Calu3 (cell line): ENCODE measurements at regions of chr6 and their contacts with region 1.

Region 1: GRCh38 chr6:1110164-1110563 is 201.7 kb upstream of the FOXQ1 start:
- DNase-seq: peak; percentile 32
- H3K4me3 Mint-ChIP-seq: no peak overlapping the region
- H3K27ac Mint-ChIP-seq: no peak overlapping the region
- H3K4me1 Mint-ChIP-seq: peaks cover 27% of the 10 kb centered on the region
- H3K27me3 Mint-ChIP-seq: no peaks in the 10 kb centered on the region
- CTCF ChIP-seq: no peak

Region 2: DNA sequence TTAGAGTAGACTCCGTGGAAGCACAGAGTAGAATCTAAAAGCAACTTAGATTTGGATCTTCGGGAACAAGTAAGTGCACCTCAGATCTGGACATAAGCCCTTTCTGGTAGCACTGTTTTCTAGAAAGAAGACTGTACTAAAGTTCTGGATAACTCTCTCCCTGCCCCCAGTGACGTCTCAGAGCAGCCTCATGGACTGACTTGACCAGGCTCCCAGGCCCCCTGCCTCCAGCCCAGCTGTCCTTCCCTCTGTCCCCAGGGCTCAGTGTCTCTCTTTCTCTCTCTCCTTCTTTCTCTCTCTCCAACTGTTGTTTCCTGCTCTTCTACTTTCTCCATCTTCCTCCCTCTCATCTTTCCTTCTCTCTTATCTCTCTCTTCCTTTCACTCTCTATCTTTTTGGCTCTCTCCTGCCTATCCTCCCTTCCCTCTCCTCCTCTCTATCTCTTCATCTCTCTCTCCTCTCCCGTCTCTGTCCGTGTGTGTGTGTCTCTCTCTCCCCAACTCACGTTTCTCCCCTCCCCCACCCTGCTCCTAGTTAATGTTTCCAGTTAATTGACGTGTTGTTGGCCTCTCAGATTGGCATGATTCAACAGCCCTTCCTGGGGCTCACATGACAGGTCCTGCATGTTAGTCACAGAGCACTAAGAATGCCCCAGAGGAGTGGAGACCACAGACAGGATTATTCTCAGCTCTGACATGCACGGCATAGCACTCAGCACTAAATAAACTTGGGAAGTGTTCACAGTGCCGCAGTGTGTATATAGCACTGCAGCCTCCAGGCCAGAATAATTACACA is 21.3 kb after region 1 on chr6:
- CTCF ChIA-PET with region 1: no interaction called
- intact Hi-C with region 1: no loop called
- DNase-seq: peak; percentile 70
- H3K4me3 Mint-ChIP-seq: peak overlapping the region; percentile 3
- H3K27ac Mint-ChIP-seq: peak overlapping the region; percentile 19
- H3K4me1 Mint-ChIP-seq: peaks cover 40% of the 10 kb centered on the region
- H3K27me3 Mint-ChIP-seq: no peaks in the 10 kb centered on the region
- CTCF ChIP-seq: no peak

Region 3: GRCh38 chr6:1179571-1180459 is 69.7 kb after region 1 on chr6:
- CTCF ChIA-PET with region 1: no interaction called
- intact Hi-C with region 1: loop called (anchors 5 kb)
- DNase-seq: no peak
- H3K4me3 Mint-ChIP-seq: peak overlapping the region; percentile 45
- H3K27ac Mint-ChIP-seq: no peak overlapping the region
- H3K4me1 Mint-ChIP-seq: peaks cover 8% of the 10 kb centered on the region
- H3K27me3 Mint-ChIP-seq: peaks cover 12% of the 10 kb centered on the region
- CTCF ChIP-seq: no peak

Region 4: DNA sequence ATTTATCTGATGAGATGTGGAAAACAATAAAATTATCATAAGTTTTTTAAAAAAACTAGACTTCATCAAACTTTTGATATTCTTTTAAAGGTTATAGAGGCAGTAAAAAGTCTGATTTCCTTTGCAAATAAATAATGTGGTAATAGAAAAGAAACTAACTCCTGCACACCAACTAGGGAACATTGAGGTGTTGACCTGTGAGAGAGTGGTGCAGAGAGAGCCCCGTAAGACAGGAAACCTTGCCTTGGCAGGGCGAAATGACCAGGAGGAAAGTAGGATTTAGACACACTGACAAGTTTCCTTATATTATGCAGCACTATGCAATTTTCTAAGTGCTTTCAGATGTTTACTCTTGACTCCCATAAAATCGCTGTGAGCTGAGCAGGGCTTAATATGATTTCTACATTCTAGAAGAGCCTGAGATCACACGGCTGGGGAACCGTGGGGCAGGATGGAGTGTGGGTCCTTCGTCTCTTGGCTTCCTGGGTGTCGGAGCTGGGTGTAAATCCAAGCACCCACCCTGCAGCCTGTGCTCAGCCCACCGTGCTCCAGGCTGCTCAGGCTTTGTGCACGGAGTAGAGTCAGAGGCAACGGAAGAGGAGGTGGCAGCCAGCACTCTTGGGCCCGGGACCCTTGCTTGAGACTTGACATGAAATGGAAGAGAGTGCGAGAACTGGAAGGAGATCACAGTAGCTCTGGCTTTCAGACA is 140.5 kb after region 1 on chr6:
- CTCF ChIA-PET with region 1: no interaction called
- intact Hi-C with region 1: loop called (anchors 2 kb)
- DNase-seq: no peak
- H3K4me3 Mint-ChIP-seq: no peak overlapping the region
- H3K27ac Mint-ChIP-seq: peak overlapping the region; percentile 85
- H3K4me1 Mint-ChIP-seq: peaks cover 17% of the 10 kb centered on the region
- H3K27me3 Mint-ChIP-seq: no peaks in the 10 kb centered on the region
- CTCF ChIP-seq: no peak

Region 5: DNA sequence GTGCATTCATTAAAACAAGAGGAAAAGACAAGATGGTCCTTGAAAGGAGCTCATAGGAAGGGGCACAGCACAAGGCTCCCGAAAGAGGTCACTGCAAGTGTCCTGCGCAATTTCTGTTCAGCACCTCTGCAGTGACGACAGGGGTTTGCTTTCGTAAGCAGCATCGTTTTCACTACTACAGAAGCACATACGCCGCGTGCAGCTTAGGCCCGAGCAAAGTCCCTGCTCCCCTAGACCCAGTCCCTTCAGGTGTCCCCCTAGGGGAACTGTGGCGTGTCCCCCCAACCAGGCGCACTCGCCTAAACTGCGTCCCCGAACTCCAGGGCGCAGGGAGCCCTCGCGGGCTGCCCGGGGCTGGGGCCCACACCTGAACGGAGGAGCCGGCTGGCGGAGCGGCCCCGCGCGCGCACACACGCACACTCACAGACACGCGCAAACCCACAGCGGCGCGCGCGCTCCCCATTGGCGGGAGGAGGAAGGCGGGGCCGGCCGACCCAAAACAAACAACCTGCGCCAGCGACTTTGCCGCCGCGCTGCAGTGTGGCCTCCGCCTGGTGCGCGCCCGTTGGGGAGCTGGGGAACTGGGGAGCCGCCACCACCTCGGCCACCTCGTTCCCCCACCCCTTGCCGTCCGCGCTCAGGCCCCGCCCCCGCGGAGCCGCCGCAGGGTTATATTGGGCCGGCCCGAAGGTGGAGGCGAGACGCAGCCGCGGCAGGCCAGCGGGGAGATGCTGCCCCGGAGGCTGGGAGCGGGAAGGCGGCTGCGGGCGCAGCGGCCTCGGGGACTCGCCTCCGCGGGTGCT is 201.4 kb after region 1 on chr6 and contains the start of gene FOXQ1:
- CTCF ChIA-PET with region 1: interaction called, 3 read pairs
- intact Hi-C with region 1: loop called (anchors 2 kb)
- DNase-seq: peak; percentile 94
- H3K4me3 Mint-ChIP-seq: peak within 1 kb of the TSS; percentile 76
- H3K27ac Mint-ChIP-seq: peak within 1 kb of the TSS; percentile 82
- H3K4me1 Mint-ChIP-seq: peaks cover 31% of the 10 kb centered on the region
- H3K27me3 Mint-ChIP-seq: no peaks in the 10 kb centered on the region
- CTCF ChIP-seq: no peak
- total RNA-seq, gene FOXQ1: 46.1 and 51.0 TPM in 2 replicates

Region 6: DNA sequence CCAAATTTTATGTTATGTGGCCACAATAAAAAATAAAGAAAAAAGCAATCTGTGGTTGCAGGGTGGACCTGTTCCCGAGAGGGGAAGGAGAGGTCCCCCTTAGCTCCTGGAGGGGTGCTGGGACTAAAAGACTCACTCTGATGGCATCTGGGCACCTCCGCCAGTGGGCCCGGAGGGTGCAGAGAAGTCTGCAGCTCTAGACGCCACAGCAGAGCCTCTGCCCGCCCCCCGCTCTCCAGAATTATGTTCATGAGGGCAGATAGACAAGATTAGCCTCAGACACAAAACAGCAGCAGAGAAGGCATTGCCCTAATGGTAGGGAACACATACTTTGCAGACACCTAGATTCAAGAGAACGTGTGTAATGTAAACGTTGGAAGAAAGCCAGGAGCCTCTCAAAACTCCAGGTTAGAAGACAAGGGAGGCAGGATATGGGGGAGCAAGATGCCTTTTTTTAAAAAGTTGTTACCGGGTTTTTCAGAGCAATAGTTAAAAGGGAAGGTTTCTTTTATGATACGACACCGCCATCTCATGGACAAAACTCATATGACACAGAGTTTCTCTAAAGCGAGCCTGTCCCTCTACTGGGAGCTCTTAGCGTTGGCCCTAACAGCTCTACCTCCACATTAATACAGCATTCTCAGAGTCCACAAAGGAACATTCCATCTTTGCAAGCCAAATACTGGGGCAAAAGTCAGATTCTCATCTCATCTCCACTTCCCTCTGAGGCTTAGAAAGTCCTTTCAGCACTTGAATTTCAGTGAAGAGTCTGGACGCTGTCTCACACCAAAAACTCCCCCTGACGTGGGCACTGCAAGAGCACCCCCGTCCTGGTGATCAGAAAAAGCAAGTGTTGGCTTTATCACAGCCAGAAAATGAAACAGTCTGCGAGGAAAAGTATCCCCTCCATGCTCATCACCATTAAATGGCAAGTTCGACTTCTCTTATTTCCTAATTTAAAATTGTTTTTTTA is 326.5 kb after region 1 on chr6:
- CTCF ChIA-PET with region 1: no interaction called
- intact Hi-C with region 1: no loop called
- DNase-seq: peak; percentile 53
- H3K4me3 Mint-ChIP-seq: no peak overlapping the region
- H3K27ac Mint-ChIP-seq: no peak overlapping the region
- H3K4me1 Mint-ChIP-seq: no peaks in the 10 kb centered on the region
- H3K27me3 Mint-ChIP-seq: peaks cover 67% of the 10 kb centered on the region
- CTCF ChIP-seq: peak; percentile 38